ENCODE measurements at regions of chr1 and their contacts with region 1.

Region 1: DNA sequence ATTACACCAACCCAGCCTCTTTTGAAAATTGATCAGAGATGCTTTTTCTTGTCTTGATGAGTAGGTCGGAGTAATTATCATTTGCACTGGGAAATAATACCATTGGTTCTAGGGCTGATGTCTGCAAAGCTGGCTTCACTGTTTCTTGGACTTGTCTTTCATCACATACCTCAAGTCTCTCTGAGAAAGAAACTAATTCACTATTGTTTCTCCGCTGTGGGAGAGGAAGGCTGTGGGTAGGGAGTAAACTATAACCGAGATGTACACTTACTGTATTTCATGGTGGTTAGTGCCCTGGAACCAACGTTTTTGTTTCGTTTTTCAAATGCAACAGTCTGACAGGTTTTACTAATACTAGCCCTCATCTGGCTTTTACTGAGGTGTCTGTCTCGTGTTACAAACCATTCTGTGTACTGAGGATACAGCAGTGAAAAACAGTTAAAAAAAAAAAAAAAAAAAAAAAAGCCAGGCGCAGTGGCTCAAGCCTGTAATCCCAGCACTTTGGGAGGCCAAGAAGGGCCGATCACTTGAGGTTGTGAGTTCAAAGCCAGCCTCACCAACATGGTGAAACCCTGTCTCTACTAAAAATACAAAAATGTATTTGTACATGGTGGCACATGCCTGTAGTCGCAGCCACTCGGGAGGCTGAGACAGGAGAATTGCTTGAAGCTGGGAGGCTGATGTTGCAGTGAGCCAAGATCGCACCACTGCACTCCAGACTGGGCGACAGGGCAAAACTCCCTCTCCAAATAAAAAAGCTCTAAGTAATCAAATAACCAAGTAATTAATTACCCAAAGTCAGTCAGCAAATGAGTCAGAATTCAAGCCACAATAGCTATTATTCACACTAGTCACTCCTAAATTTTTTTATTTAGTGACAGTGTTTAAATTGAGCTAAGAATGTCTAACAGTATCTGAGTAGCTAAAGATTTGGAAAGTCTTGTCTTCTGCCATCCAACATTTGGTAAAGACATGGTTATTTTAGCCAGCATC is 23.3 kb downstream of the TOMM20 start:
- DNase-seq: no peak
- H3K4me3 ChIP-seq: no peak overlapping the region
- H3K27ac ChIP-seq: no peak overlapping the region
- H3K27me3 ChIP-seq: no peaks in the 10 kb centered on the region
- CTCF ChIP-seq: no peak

Region 2: GRCh38 chr1:235093696-235094592 is 11.4 kb before region 1 on chr1:
- CTCF ChIA-PET with region 1: interaction called, 10 read pairs
- POLR2A ChIA-PET with region 1: no interaction called
- DNase-seq: no peak
- H3K4me3 ChIP-seq: no peak overlapping the region
- H3K27ac ChIP-seq: no peak overlapping the region
- H3K27me3 ChIP-seq: no peaks in the 10 kb centered on the region
- CTCF ChIP-seq: peak; percentile 94

Region 3: DNA sequence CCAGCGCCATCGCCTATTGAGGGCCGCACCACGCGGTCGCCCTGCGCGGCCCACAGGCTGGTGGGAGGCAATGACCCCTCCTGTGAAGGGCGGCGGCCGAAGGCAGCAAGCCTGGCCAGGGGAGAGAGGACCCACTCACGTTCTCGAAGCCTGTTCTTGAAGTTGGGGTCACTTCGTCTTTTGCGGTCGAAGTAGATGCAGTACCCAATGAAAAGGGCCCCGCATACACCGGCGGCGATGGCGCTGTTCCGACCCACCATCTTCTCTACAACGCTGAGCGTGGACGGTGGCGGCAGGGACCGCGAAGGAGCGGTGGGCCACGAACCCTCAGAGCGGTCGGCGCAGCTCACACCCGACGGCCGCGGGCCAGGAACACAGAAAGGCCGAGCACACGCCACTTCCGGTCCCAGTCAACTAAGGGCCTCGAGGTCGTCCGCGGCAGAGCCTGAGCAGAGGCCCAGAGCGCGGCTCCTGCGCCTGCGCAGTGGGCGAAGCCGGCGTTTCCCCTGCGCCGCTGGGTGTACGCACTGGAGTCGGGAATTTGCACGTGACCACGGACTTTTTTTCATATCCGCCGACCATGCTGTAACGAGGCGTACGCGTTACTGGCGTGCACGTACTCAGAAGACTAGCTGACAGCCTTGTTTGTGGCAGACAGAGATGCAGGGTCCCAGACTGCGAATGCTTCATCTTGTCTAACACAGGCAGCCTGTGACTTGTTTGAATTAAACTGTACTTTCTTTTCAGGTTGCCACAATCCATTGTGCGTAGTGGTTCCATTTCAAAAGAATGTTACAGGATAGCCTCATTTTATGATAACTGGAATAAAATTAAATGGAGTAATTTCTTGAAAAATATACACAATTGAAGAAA is 23.3 kb after region 1 on chr1 and contains the start of gene TOMM20:
- CTCF ChIA-PET with region 1: interaction called, 11 read pairs
- POLR2A ChIA-PET with region 1: interaction called, 6 read pairs
- DNase-seq: peak; percentile 97
- H3K4me3 ChIP-seq: peak within 1 kb of the TSS; percentile 96
- H3K27ac ChIP-seq: peak within 1 kb of the TSS; percentile 89
- H3K27me3 ChIP-seq: no peaks in the 10 kb centered on the region
- CTCF ChIP-seq: no peak
- polyA plus RNA-seq, gene TOMM20: 82.2 and 94.0 TPM in 2 replicates

Region 4: GRCh38 chr1:235199441-235199840 is 94.1 kb after region 1 on chr1:
- CTCF ChIA-PET with region 1: no interaction called
- POLR2A ChIA-PET with region 1: no interaction called
- DNase-seq: no peak
- H3K4me3 ChIP-seq: no peak overlapping the region
- H3K27ac ChIP-seq: no peak overlapping the region
- H3K27me3 ChIP-seq: no peaks in the 10 kb centered on the region
- CTCF ChIP-seq: peak; percentile 52

Measured in AG04450 (cell line).